ENCODE measurements at regions of chr20 and their contacts with region 1.

Region 1: GRCh38 chr20:45011108-45011526 is 44.8 kb downstream of the STK4 start:
- DNase-seq: no peak
- ATAC-seq: peak; percentile 79
- H3K4me3 ChIP-seq: no peak overlapping the region
- H3K27ac ChIP-seq: no peak overlapping the region
- H3K4me1 ChIP-seq: no peaks in the 10 kb centered on the region
- H3K27me3 ChIP-seq: no peaks in the 10 kb centered on the region
- CTCF ChIP-seq: peak; percentile 55 to 64 (median 61)
- EP300 ChIP-seq: no peak
- POLR2A ChIP-seq: no peak
- RAD21 ChIP-seq: peak; percentile 67

Region 2: DNA sequence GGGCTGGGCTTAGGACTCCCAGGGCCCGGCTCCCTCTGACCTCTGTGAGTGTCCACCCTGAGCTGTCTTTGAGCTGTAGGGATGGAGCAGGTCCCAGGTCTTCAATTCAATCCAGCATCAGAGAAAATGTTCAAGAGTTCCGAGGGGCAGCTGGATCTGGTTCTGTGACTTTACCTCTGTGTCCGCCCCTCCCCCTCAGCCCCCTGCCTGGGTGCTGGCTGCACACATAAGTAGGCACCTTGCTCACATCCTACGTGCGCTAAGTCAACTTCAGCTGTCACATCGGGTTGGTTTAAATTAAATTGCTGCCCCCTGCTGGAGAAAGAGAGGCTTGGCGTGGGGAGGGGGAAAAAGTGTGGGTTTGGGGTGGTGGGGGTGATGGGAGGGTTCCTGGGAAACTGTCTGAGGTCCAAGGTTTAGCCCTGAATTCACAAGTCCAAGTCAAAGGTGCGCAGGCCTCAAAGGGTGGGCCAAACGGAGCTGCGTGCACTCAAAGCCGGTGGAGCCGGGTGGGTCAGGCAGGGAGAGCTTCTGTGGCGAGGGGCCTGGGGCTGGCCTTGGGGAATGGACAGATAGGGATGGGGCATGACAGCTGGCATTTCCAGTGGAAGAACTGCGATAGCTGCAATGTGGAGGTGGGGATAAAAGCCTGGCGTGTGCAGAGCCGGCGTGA is 100.8 kb after region 1 on chr20:
- CTCF ChIA-PET with region 1: interaction called, 11 read pairs
- POLR2A ChIA-PET with region 1: no interaction called
- RAD21 ChIA-PET with region 1: interaction called, 4 read pairs
- SMC1A ChIA-PET with region 1: interaction called, 3 read pairs
- in situ Hi-C with region 1: no loop called
- intact Hi-C with region 1: no loop called
- DNase-seq: no peak
- ATAC-seq: peak; percentile 38; the same call in 2 of the 3 replicates
- H3K4me3 ChIP-seq: no peak overlapping the region
- H3K27ac ChIP-seq: no peak overlapping the region
- H3K4me1 ChIP-seq: no peaks in the 10 kb centered on the region
- H3K27me3 ChIP-seq: no peaks in the 10 kb centered on the region; a peak in 1 of 4 replicates
- CTCF ChIP-seq: peak; percentile 29 to 39 (median 36); a peak in 5 of 6 replicates
- EP300 ChIP-seq: no peak
- POLR2A ChIP-seq: no peak
- RAD21 ChIP-seq: peak; percentile 27

Measured in GM12878 (cell line).